Activated T-helper 1 cell treated with anti-CD3 and anti-CD28 coated beads, Interleukin-12 subunit alpha, Interleukin-12 subunit beta, Interleukin-2, Interleukin-4 antibody, amounts not matched to agents 30 ng/mL and 10 ng/mL and 1 ng/mL, durations not matched to agents 14 hours and 24 hours and 36 hours (primary cell): ENCODE measurements at regions of chr11 and their contacts with region 1.

Region 1: GRCh38 chr11:129992161-129992944 is 10.3 kb downstream of the PRDM10 start:
- DNase-seq: no peak
- H3K4me3 Mint-ChIP-seq: no peak overlapping the region
- H3K27ac Mint-ChIP-seq: no peak overlapping the region
- H3K4me1 Mint-ChIP-seq: no peaks in the 10 kb centered on the region
- H3K27me3 Mint-ChIP-seq: no peaks in the 10 kb centered on the region

Region 2: GRCh38 chr11:129743111-129743815 is 249.1 kb before region 1 on chr11:
- intact Hi-C with region 1: no loop called
- DNase-seq: no peak
- H3K4me3 Mint-ChIP-seq: no peak overlapping the region
- H3K27ac Mint-ChIP-seq: no peak overlapping the region
- H3K4me1 Mint-ChIP-seq: no peaks in the 10 kb centered on the region
- H3K27me3 Mint-ChIP-seq: peaks cover 2% of the 10 kb centered on the region

Region 3: GRCh38 chr11:129960216-129961214 is 31.8 kb before region 1 on chr11:
- intact Hi-C with region 1: loop called (anchors 2 kb)
- DNase-seq: no peak
- H3K4me3 Mint-ChIP-seq: no peak overlapping the region
- H3K27ac Mint-ChIP-seq: peak overlapping the region; percentile 64
- H3K4me1 Mint-ChIP-seq: peaks cover 10% of the 10 kb centered on the region
- H3K27me3 Mint-ChIP-seq: no peaks in the 10 kb centered on the region

Region 4: GRCh38 chr11:130323452-130324450 is 331.4 kb after region 1 on chr11:
- intact Hi-C with region 1: no loop called
- DNase-seq: no peak
- H3K4me3 Mint-ChIP-seq: no peak overlapping the region
- H3K27ac Mint-ChIP-seq: no peak overlapping the region
- H3K4me1 Mint-ChIP-seq: no peaks in the 10 kb centered on the region
- H3K27me3 Mint-ChIP-seq: peaks cover 3% of the 10 kb centered on the region